Heart left ventricle (tissue), 16 donors: ENCODE measurements at regions of chr1 and their contacts with region 1.

Region 1: DNA sequence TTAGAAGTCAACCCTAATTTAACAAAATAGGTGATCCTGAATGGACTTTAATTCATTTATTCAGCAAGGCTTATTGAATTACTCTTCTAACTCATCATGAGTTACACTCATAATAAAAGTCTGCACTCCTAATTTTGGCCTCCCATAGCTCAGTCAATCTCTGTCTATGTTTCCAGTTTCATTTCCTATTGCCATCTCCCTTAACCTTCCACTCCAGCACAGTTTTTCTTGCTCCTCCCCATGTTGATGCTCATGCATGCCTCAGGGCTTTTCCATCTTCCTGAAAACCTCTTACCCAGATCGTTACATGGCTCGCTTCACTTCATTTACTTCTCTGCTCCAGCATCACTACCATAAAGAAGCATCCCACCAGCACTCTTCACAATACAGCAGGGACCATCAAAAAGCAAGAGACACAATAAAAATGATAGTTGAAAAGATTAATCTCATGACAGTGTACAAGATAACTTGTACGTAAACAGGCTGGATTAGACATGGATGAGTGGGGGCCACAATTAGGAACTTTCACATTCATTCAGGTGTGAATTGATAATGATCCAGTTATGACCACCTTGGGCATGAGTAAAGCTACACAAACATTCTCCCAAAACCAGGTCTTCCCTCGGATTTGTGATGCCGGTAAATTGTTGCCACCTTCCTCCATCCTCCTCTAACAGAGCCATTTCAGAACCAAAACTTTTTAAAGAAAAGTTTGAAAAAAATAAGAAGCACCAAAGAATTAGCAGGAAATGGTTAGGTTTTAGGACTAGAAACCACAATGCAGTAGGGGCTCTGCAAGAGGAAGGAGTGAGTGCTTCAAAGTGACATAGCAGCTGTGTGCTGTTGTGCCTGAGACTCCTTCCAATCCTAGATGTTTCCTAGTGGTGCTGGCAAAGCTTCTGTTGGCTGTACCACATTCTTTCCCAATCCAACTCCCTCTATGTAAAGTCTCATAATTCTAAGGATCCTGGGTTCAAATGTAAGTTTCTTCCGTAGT is 89.8 kb downstream of the OLFML2B start:
- DNase-seq: no peak
- ATAC-seq: peak in 1 of 4 donors; percentile 41
- H3K4me3 ChIP-seq: no peak overlapping the region
- H3K27ac ChIP-seq: peak overlapping the region in 1 of 12 donors; percentile 9
- H3K4me1 ChIP-seq: peaks cover 0 to 28% (median 0%) of the 10 kb centered on the region in 12 donors
- H3K27me3 ChIP-seq: no peaks in the 10 kb centered on the region
- CTCF ChIP-seq: no peak
- POLR2A ChIP-seq: no peak

Region 2: GRCh38 chr1:161879261-161879660 is 54.6 kb before region 1 on chr1:
- intact Hi-C with region 1: no loop called
- DNase-seq: no peak
- ATAC-seq: no peak
- H3K4me3 ChIP-seq: no peak overlapping the region
- H3K27ac ChIP-seq: no peak overlapping the region
- H3K4me1 ChIP-seq: no peaks in the 10 kb centered on the region
- H3K27me3 ChIP-seq: no peaks in the 10 kb centered on the region
- CTCF ChIP-seq: no peak
- POLR2A ChIP-seq: no peak

Region 3: DNA sequence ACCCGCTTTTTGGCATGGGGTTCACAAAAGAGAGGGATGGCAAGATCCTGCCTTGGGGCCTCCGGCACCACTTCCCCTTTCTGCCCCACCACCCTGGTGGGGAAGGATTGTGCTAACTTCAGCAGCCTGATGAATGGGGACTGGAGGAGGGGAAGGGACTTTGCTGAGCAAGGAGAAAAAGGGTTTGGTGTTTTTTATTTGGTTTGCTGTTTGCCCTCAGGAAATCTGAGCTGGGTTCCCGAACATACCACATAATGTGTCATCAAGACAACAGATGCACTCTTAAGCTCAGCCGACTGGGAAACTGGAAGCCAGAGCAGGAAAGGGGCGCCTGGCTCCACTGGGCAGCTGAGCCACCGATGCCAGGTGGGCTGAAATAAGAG is 69.9 kb after region 1 on chr1:
- intact Hi-C with region 1: loop called in 1 of 10 experiments (anchors 10 kb)
- DNase-seq: peak in 3 of 5 donors; percentile 36 to 56 (median 39)
- ATAC-seq: peak; percentile 32 to 83 (median 78)
- H3K4me3 ChIP-seq: peak overlapping the region in 6 of 12 donors; percentile 19 to 48 (median 26)
- H3K27ac ChIP-seq: peak overlapping the region in 6 of 12 donors; percentile 3 to 93 (median 49)
- H3K4me1 ChIP-seq: peaks cover 0 to 29% (median 2%) of the 10 kb centered on the region in 12 donors
- H3K27me3 ChIP-seq: no peaks in the 10 kb centered on the region
- CTCF ChIP-seq: no peak
- POLR2A ChIP-seq: no peak